AG04449 (cell line): ENCODE measurements at regions of chr10 and their contacts with region 1.

Region 1: DNA sequence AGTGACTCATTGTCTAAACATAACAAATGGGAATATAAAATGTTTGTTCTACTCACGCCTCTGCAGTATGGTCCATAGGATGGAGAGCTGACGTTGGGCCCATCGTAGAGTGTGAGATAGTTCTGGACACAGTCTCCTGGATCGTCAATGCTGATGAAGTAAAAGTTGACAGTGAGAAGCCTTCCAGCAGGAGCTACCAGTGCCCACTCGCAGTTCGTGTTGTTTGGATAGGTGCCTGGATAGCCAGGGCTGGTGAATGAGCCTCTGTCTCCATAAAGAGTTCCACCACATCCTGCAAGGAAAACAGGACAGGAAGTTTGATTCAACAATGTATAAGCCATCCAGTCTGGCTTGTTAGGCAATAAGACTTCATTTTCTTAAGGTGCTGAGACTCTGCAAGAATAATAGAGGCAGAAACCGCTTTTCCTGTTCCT is 79.6 kb downstream of the OR13A1 start:
- DNase-seq: no peak
- H3K4me3 ChIP-seq: no peak overlapping the region
- CTCF ChIP-seq: no peak

Region 2: DNA sequence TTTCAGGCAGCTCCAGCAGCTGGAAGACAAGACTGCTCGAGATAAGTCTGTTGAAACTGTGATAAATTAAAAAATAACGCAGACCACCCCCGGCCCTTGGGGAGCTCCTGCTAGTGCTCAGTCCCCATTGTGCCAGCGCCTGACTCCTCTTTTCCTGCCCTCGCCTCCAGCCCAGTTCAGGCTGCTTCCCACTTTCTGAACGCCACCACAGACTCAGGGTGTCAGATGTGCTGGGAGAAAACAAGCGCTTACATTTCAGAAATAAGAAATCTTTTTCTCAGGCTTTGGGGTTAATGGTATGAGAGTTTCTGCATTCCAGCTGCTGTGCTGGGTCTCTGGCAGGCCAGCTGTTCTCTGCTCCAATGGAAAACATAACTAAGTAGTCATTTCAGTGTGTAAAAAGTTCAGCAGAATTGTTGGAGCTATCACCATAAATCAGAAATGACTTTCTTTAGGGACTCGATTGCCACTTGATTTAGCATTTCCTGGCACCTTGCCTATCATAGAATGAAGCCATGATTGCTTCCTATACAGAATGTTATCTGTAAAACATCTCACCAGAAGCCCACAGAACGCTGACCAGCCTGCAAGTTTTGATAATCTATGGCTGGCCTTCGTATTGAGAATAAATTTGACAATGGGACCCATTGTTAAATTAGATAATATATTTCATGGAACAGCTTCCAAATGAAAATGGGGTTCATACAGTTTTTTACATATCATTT is 1330.1 kb before region 1 on chr10:
- CTCF ChIA-PET with region 1: no interaction called
- POLR2A ChIA-PET with region 1: no interaction called
- DNase-seq: no peak
- H3K4me3 ChIP-seq: no peak overlapping the region
- CTCF ChIP-seq: no peak

Region 3: DNA sequence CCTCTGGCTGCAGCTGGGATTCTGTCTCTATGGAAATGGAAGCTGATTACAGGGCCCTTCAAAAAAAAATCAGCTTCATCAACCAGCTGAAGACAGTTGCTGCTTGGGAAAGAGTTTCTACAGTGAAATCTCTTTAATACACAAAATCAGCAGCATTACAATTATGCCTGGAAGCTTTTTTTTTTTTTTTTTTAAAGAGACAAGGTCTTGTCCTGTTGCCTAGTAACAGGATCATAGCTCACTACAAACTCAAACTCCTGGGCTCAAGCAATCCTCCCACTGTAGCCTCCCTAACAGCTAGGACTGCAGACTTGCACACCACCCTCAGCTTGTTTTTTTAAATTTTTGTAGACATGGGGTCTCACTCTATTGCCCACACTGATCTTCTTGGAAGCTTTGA is 14.9 kb before region 1 on chr10:
- CTCF ChIA-PET with region 1: interaction called, 14 read pairs
- POLR2A ChIA-PET with region 1: no interaction called
- DNase-seq: no peak
- H3K4me3 ChIP-seq: no peak overlapping the region
- CTCF ChIP-seq: no peak

Region 4: GRCh38 chr10:45249978-45250693 is 14.3 kb after region 1 on chr10:
- CTCF ChIA-PET with region 1: interaction called, 15 read pairs
- POLR2A ChIA-PET with region 1: no interaction called
- DNase-seq: no peak
- H3K4me3 ChIP-seq: 0 out of 2 replicates have a peak overlapping the region, but pooled peaks have one; percentile 10
- CTCF ChIP-seq: peak; percentile 11